ENCODE measurements at regions of chr2 and their contacts with region 1.

Region 1: DNA sequence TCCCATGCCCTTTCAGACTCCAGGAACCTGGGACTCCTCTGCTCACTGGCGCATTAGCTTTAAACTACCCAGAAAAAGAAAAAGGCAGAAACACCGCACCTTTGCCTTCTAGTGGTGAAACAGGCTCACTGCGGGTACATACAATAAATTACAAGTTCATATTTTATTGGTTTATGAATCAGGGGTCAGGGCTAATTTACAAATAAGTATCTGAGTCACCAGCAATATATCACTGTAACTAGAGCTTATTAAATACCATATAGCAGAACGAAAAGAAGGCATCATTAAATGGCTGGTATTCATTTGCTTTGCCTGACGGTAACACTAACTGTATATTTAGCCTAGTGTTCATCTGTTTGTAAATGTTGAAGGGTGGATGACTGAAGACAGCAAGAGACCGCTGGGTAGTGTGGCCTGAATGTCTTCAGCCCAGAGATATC is 26.9 kb upstream of the DTNB start:
- DNase-seq: peak; percentile 39
- H3K4me3 Mint-ChIP-seq: no peak overlapping the region
- H3K27ac Mint-ChIP-seq: no peak overlapping the region
- H3K4me1 Mint-ChIP-seq: peaks cover 4% of the 10 kb centered on the region
- H3K27me3 Mint-ChIP-seq: no peaks in the 10 kb centered on the region

Region 2: GRCh38 chr2:25673300-25674076 is 26.8 kb before region 1 on chr2 and contains the start of gene DTNB:
- CTCF ChIA-PET with region 1: interaction called, 10 read pairs
- POLR2A ChIA-PET with region 1: no interaction called
- intact Hi-C with region 1: no loop called
- DNase-seq: peak; percentile 85
- H3K4me3 Mint-ChIP-seq: peak within 1 kb of the TSS; percentile 80
- H3K27ac Mint-ChIP-seq: peak within 1 kb of the TSS; percentile 62
- H3K4me1 Mint-ChIP-seq: peaks cover 27% of the 10 kb centered on the region
- H3K27me3 Mint-ChIP-seq: no peaks in the 10 kb centered on the region
- total RNA-seq, gene DTNB: 20.8 to 25.1 TPM

Region 3: DNA sequence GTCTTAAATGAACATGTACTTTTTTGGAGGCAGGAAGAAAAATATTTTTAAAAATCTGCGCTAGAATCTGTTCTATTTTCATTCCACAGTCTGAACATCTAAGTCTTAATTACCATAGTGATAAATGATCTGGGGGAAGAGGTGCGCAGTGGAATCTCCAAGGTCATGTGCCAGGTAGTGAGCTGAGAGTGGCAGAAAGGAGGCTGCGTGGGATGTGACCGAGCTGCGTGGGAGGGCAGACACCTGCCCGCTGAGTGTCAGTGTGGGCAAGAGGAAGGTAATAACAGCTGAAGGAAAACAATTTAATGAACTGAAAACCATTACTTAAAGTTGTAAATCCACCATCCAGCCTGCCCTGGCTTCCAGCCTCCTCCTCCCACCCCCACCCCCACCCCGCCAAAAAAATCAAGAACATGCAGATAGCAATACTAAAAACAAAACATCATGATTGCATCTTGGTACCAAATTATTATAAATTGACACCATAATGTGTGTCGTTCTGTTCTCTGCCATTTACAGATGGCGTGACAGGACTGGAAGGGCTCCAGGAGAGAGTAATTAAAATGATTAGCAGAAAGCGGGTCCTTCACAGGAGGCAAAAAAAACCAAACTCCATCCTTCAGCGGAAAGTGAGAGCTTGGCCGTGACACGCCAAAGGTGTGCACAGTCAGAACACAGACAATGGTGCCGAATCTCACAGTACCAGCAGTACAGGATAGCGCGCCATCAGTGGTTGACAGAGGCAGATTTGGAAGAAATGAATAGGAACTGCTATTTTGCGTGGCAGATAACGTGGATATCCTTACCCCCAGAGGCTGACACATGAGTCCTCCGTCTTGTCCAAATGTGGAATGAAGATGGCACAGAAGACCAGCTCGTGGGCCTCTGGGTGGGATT is 15.4 kb before region 1 on chr2:
- CTCF ChIA-PET with region 1: interaction called, 31 read pairs
- POLR2A ChIA-PET with region 1: no interaction called
- intact Hi-C with region 1: no loop called
- DNase-seq: peak; percentile 25
- H3K4me3 Mint-ChIP-seq: no peak overlapping the region
- H3K27ac Mint-ChIP-seq: no peak overlapping the region
- H3K4me1 Mint-ChIP-seq: peaks cover 5% of the 10 kb centered on the region
- H3K27me3 Mint-ChIP-seq: no peaks in the 10 kb centered on the region

Region 4: GRCh38 chr2:25690058-25690457 is 10.2 kb before region 1 on chr2:
- CTCF ChIA-PET with region 1: interaction called, 31 read pairs
- POLR2A ChIA-PET with region 1: no interaction called
- intact Hi-C with region 1: no loop called
- DNase-seq: no peak
- H3K4me3 Mint-ChIP-seq: no peak overlapping the region
- H3K27ac Mint-ChIP-seq: no peak overlapping the region
- H3K4me1 Mint-ChIP-seq: no peaks in the 10 kb centered on the region
- H3K27me3 Mint-ChIP-seq: no peaks in the 10 kb centered on the region

Region 5: GRCh38 chr2:25710750-25711149 is 10.5 kb after region 1 on chr2:
- CTCF ChIA-PET with region 1: interaction called, 13 read pairs
- POLR2A ChIA-PET with region 1: no interaction called
- intact Hi-C with region 1: no loop called
- DNase-seq: no peak
- H3K4me3 Mint-ChIP-seq: no peak overlapping the region
- H3K27ac Mint-ChIP-seq: no peak overlapping the region
- H3K4me1 Mint-ChIP-seq: peaks cover 17% of the 10 kb centered on the region
- H3K27me3 Mint-ChIP-seq: peaks cover 16% of the 10 kb centered on the region

Region 6: DNA sequence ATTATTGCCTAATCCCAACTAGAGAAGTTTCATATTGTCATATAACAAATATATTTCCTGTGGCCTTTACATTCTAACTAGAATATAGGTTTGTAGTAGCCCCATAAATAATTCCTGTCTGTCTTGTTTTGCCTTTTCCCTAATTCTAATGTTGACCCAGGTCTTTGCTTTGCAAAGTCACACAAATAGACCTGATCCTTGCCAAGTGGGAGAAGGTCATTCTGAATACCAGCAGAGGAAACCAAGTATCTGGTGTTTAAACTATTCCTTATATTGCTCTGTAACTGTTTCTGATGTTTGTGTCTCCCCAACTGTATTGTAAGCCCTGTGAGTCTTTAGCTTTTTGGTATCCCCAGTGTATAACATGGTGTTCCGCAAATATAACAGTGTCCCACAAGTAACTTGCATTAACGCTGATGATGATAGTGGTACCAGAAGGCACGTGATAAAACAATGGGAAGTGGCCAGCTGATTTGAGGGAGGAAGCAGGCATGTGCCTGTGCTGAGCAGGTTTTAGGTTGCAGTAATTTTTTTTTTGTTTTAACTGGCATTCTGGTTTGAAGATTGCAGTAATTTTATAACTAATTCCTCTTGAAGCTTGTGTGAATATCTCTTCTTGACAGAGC is 555.6 kb after region 1 on chr2:
- CTCF ChIA-PET with region 1: no interaction called
- POLR2A ChIA-PET with region 1: no interaction called
- intact Hi-C with region 1: no loop called
- DNase-seq: no peak
- H3K4me3 Mint-ChIP-seq: no peak overlapping the region
- H3K27ac Mint-ChIP-seq: no peak overlapping the region
- H3K4me1 Mint-ChIP-seq: peaks cover 12% of the 10 kb centered on the region
- H3K27me3 Mint-ChIP-seq: no peaks in the 10 kb centered on the region